ENCODE measurements at regions of chr3 and their contacts with region 1.

Region 1: DNA sequence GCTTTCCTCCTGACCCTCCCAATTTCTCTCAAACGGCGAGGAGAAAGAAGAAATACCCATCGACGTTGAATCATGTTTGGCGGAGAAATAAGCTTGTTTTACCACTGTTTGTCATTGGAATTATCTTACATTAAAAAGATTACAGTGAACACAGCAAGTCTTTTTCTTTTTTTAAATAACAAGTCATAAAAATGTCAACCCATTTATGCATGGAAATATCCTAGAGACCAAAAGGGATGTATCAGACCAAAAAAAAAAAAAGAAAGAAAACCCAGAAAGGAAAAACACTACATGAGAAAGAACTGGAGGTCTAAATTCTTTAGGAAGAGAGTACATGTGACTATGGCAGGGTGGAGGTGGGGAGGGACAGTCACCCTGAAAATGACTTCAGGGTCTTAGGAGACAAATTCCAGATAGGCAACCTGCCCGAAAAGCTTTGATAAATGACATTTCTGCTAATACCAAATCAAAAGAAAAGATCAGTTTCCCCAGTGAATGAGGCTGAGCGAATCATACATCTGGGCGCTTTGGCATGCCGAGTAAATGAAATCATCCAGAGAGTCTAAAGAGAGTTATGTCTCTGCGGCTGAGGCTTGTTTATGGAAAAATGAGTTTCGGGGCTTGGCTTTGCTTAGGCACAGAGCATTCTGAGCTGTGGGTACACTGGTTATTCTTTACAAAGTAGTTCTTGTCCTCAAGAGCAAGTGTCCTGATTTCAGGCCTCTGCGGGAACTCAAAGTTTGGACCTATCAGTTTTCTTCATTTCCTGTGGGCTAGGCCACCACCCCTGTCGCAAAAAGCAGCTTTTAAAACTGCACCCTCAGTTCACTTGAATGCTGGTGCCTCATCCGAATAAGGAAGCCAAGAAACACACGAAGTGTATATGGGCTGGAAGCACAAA is 110.1 kb upstream of the TGFBR2 start:
- DNase-seq: no peak
- ATAC-seq: no peak
- H3K4me3 ChIP-seq: no peak overlapping the region
- H3K27ac ChIP-seq: no peak overlapping the region
- H3K4me1 ChIP-seq: peaks cover 97% of the 10 kb centered on the region
- H3K27me3 ChIP-seq: no peaks in the 10 kb centered on the region
- CTCF ChIP-seq: no peak
- EP300 ChIP-seq: no peak
- POLR2A ChIP-seq: no peak
- RAD21 ChIP-seq: no peak

Region 2: DNA sequence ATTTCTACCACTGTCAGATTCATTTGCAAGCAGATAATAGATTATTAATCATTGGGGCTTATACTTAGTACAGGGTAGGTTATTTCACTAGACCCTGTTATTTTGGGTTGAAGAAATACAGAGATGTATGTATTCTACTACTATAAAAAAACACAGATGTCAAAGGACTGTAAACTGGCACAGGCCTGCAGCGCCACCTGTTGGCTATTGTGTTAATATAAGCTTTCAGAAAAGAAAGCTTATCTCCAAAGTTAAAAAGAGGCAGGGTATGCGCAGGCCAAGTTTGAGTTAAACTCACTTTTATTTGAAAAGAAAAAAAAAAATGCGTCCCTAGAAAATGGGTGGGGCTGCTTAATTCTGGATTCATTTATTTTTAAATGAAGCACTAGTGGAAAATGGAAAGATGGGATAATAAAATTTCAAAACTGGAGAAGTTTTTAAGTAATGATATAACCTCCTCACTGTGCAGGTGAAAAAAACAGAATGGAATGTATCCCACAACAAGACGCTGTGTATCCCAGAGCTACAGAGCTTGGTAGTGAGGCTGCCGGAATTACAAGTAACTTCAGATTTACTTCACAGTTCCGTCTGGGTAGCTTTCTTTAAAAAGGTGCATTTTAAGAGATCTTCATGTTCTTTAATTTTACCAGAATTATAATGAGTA is 297.1 kb before region 1 on chr3:
- CTCF ChIA-PET with region 1: no interaction called
- POLR2A ChIA-PET with region 1: no interaction called
- in situ Hi-C with region 1: no loop called
- intact Hi-C with region 1: loop called (anchors 1 kb)
- DNase-seq: peak; percentile 49
- ATAC-seq: peak; percentile 61
- H3K4me3 ChIP-seq: no peak overlapping the region
- H3K27ac ChIP-seq: no peak overlapping the region
- H3K4me1 ChIP-seq: peaks cover 21% of the 10 kb centered on the region
- H3K27me3 ChIP-seq: no peaks in the 10 kb centered on the region; a peak in 1 of 5 replicates
- CTCF ChIP-seq: peak; percentile 72
- EP300 ChIP-seq: no peak
- POLR2A ChIP-seq: no peak
- RAD21 ChIP-seq: peak; percentile 62

Region 3: DNA sequence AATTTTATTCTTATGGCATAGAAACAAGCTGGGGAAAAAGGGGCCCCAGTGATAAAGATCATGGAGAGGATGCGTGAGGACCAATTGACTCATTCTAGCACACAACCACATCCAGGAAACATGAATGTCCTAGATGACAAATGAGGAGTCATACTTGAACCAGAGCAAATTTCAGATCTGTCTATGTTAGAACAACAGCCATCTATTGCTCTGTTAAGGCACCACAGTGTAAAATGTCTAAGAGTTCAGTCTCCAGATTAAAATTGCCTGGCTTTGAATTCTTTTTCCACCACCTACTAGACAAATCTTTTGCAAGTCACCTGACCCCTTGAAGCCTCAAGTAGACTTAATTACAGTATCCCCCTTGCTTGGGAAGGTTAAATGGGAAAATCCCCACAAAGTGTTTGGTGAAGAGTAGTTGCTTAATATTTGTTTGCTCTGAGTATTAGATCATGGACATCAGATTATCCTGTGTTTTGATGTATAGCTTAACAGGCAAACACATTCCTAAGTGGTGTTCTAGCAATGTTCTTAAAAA is 148.6 kb before region 1 on chr3:
- CTCF ChIA-PET with region 1: no interaction called
- POLR2A ChIA-PET with region 1: interaction called, 5 read pairs
- in situ Hi-C with region 1: no loop called
- intact Hi-C with region 1: loop called (anchors 2 kb)
- DNase-seq: peak; percentile 87
- ATAC-seq: peak; percentile 66
- H3K4me3 ChIP-seq: no peak overlapping the region; a peak in 1 of 6 replicates
- H3K27ac ChIP-seq: peak overlapping the region; percentile 62
- H3K4me1 ChIP-seq: peaks cover 93% of the 10 kb centered on the region
- H3K27me3 ChIP-seq: no peaks in the 10 kb centered on the region
- CTCF ChIP-seq: no peak
- EP300 ChIP-seq: peak in 1 of 2 experiments; percentile 88; a peak in 2 of 4 replicates
- POLR2A ChIP-seq: no peak
- RAD21 ChIP-seq: no peak

Region 4: DNA sequence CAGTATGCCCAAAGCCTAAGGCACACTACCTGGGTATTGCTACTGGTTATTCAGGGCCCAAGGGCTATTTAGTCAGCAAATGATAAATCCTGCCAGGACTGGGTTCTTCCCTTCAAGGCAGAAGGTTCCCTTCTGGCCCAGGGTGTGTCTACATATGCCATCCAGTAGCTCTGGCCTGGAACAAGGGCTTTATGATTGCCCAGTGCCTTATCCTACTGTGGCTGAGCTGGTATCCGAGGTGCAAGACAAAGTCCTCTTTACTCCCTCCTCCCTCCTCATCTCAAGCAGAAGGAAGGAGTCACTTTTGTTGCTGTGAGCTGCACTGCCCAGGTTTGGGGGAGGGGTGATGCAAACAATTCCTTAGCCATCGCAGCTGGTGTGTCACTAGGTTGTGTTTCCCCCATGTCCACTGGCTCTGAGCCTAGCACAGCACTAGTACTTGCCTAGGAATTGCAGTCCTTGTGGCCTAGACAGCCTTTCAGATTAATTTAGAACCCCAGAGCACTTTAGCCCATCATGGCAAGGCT is 111.7 kb before region 1 on chr3:
- CTCF ChIA-PET with region 1: no interaction called
- POLR2A ChIA-PET with region 1: no interaction called
- in situ Hi-C with region 1: no loop called
- intact Hi-C with region 1: no loop called
- DNase-seq: no peak
- ATAC-seq: no peak
- H3K4me3 ChIP-seq: no peak overlapping the region
- H3K27ac ChIP-seq: no peak overlapping the region
- H3K4me1 ChIP-seq: peaks cover 11% of the 10 kb centered on the region; the same call in 1 of the 2 replicates
- H3K27me3 ChIP-seq: no peaks in the 10 kb centered on the region
- CTCF ChIP-seq: no peak
- EP300 ChIP-seq: no peak
- POLR2A ChIP-seq: no peak
- RAD21 ChIP-seq: no peak

Region 5: GRCh38 chr3:30597131-30597768 is 100.9 kb after region 1 on chr3:
- CTCF ChIA-PET with region 1: no interaction called
- POLR2A ChIA-PET with region 1: interaction called, 5 read pairs
- in situ Hi-C with region 1: no loop called
- intact Hi-C with region 1: loop called (anchors 2 kb)
- DNase-seq: peak; percentile 99
- ATAC-seq: peak; percentile 97
- H3K4me3 ChIP-seq: no peak overlapping the region; a peak in 1 of 6 replicates
- H3K27ac ChIP-seq: peak overlapping the region; percentile 98
- H3K4me1 ChIP-seq: peaks cover 74% of the 10 kb centered on the region
- H3K27me3 ChIP-seq: no peaks in the 10 kb centered on the region
- CTCF ChIP-seq: no peak
- EP300 ChIP-seq: peak; percentile 94 to 100
- POLR2A ChIP-seq: no peak
- RAD21 ChIP-seq: no peak

Region 6: DNA sequence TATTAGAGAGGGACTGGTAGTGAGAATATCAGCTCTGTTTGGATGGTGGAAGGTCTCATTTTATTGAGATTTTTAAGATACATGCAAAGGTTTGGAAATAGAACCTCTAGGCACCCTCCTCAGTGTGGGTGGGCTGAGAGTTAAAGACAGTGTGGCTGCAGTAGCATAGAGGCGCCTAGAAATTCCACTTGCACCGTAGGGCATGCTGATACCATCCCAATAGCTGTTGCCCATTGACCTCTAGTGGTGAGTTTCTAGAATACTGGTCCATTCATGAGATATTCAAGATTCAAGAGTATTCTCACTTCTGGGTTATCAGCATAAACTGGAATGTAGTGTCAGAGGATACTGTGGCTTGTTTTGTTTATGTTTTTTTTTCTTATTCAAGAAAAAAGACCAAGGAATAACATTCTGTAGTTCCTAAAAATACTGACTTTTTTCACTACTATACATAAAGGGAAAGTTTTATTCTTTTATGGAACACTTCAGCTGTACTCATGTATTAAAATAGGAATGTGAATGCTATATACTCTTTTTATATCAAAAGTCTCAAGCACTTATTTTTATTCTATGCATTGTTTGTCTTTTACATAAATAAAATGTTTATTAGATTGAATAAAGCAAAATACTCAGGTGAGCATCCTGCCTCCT is 197.3 kb after region 1 on chr3:
- CTCF ChIA-PET with region 1: no interaction called
- POLR2A ChIA-PET with region 1: no interaction called
- in situ Hi-C with region 1: no loop called
- intact Hi-C with region 1: loop called (anchors 10 kb)
- DNase-seq: peak; percentile 62
- ATAC-seq: peak; percentile 69
- H3K4me3 ChIP-seq: no peak overlapping the region
- H3K27ac ChIP-seq: peak overlapping the region; percentile 15
- H3K4me1 ChIP-seq: peaks cover 48% of the 10 kb centered on the region
- H3K27me3 ChIP-seq: no peaks in the 10 kb centered on the region
- CTCF ChIP-seq: peak; percentile 73
- EP300 ChIP-seq: no peak
- POLR2A ChIP-seq: no peak; a peak in 1 of 4 replicates
- RAD21 ChIP-seq: peak; percentile 73

Region 7: GRCh38 chr3:31275038-31275562 is 778.8 kb after region 1 on chr3:
- CTCF ChIA-PET with region 1: no interaction called
- POLR2A ChIA-PET with region 1: no interaction called
- in situ Hi-C with region 1: no loop called
- intact Hi-C with region 1: no loop called
- DNase-seq: peak; percentile 81
- ATAC-seq: peak; percentile 83
- H3K4me3 ChIP-seq: no peak overlapping the region
- H3K27ac ChIP-seq: peak overlapping the region; percentile 46
- H3K4me1 ChIP-seq: peaks cover 41% of the 10 kb centered on the region
- H3K27me3 ChIP-seq: no peaks in the 10 kb centered on the region
- CTCF ChIP-seq: no peak
- EP300 ChIP-seq: peak in 1 of 2 experiments; percentile 67; a peak in 2 of 4 replicates
- POLR2A ChIP-seq: no peak
- RAD21 ChIP-seq: no peak

Measured in HepG2 (cell line).